ENCODE measurements at regions of chr2 and their contacts with region 1.

Region 1: DNA sequence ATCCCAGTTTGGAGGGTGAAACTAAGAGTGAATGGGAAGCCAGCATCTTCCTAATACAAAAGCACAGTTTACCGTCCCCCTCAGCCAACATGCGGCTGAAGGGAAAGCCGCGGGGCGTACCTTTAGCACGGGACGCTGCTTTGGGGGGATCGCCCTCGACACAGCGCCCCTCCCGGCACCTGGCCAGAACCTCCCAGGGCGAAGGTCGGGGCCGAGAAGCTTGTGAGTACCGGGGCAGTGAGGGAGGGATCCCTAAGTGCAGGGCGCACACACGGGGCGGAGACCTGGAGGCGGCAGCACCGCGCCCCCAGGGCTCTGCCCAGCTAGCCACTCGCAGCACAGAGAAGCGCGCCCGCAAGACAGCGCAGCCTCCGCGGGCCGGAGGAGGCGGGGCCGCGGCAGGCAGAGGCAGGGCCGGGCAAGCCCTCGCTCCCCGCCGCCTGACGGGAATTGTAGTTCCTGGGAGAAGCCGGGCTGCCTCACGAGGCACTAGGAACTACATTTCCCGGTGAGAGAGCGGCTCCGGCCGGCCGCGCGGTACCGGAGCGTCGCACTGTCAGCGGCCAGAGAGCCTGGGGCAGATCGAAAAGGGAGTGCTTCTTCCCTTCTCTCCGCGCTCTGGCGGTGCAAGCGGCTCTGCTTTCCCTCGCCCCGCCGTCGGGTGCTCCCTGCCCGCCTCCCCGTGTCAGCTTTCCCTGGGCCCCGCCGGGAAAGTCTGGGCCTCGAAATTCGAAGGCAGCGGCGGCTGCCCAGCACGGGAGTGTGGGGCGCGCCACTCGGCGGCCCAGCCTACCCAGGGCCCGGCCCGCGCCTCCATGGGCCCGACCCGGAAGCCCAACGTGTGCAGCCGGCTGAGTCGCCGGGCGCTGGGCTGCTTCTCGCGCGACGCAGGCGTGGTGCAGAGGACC is at the starts of genes DCAF17 and METTL8:
- DNase-seq: peak; percentile 96
- CTCF ChIP-seq: peak; percentile 56

Region 2: DNA sequence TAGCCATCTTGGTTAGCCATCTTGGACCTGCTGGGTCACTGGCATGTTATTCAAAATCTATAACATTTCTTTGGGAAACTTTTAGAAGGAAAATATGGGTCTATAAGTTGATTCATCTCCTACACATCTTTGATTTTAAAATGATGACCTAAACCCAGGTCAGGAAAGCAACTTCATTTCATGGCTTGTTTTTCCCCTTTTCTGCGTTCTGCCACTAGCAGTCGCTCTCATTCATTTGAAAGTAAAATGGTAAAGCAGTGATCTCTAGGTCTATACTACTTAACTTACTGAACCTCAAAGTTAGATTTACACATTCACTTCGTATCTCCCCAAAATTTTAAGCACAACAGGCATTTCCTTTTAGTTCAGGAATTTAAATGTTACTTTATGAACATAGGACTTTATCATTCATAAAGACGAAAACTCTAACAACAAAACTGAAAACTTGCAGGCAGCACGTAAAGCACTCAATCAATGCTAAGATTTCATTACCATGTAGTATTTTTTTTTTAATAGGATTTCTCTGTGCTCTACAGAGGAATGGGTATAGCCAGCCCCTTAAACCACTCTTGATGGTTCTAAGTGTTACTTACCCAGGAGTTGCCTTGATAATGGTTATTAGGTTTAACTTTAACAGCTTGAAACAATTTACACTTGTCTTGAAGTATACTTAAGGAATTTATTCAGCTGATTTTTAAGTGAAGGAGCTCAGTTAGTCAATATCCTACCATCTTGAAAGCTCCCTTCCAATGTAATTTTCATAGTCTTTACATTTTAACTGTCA is 442.4 kb before region 1 on chr2:
- in situ Hi-C with region 1: loop called (anchors 25 kb)
- DNase-seq: no peak
- CTCF ChIP-seq: peak; percentile 22